Mammary epithelial cell (primary cell): ENCODE measurements at regions of chr4 and their contacts with region 1.

Region 1: GRCh38 chr4:125735102-125735501 is 420.3 kb downstream of the FAT4 start:
- DNase-seq: peak; percentile 79
- H3K4me3 ChIP-seq: no peak overlapping the region
- H3K27ac ChIP-seq: peak overlapping the region; percentile 88
- H3K4me1 ChIP-seq: peaks cover 30% of the 10 kb centered on the region
- H3K27me3 ChIP-seq: no peaks in the 10 kb centered on the region
- CTCF ChIP-seq: no peak

Region 2: GRCh38 chr4:124636788-124637187 is 1098.3 kb before region 1 on chr4:
- CTCF ChIA-PET with region 1: no interaction called
- dilution Hi-C with region 1: no loop called
- in situ Hi-C with region 1: no loop called
- intact Hi-C with region 1: loop called (anchors 5 kb)
- DNase-seq: no peak
- H3K4me3 ChIP-seq: no peak overlapping the region
- H3K27ac ChIP-seq: no peak overlapping the region
- H3K4me1 ChIP-seq: peaks cover 33% of the 10 kb centered on the region
- H3K27me3 ChIP-seq: no peaks in the 10 kb centered on the region
- CTCF ChIP-seq: no peak

Region 3: GRCh38 chr4:125389713-125390112 is 345.4 kb before region 1 on chr4:
- CTCF ChIA-PET with region 1: no interaction called
- dilution Hi-C with region 1: no loop called
- in situ Hi-C with region 1: no loop called
- intact Hi-C with region 1: loop called (anchors 5 kb)
- DNase-seq: peak; percentile 69
- H3K4me3 ChIP-seq: no peak overlapping the region
- H3K27ac ChIP-seq: peak overlapping the region; percentile 66
- H3K4me1 ChIP-seq: peaks cover 15% of the 10 kb centered on the region
- H3K27me3 ChIP-seq: no peaks in the 10 kb centered on the region
- CTCF ChIP-seq: no peak

Region 4: GRCh38 chr4:125638790-125639621 is 96.1 kb before region 1 on chr4:
- CTCF ChIA-PET with region 1: no interaction called
- dilution Hi-C with region 1: no loop called
- in situ Hi-C with region 1: no loop called
- intact Hi-C with region 1: no loop called
- DNase-seq: no peak
- H3K4me3 ChIP-seq: no peak overlapping the region
- H3K27ac ChIP-seq: no peak overlapping the region
- H3K4me1 ChIP-seq: no peaks in the 10 kb centered on the region
- H3K27me3 ChIP-seq: no peaks in the 10 kb centered on the region
- CTCF ChIP-seq: no peak

Region 5: GRCh38 chr4:126130215-126130614 is 395.1 kb after region 1 on chr4:
- CTCF ChIA-PET with region 1: no interaction called
- dilution Hi-C with region 1: no loop called
- in situ Hi-C with region 1: no loop called
- intact Hi-C with region 1: no loop called
- DNase-seq: no peak
- H3K4me3 ChIP-seq: no peak overlapping the region
- H3K27ac ChIP-seq: no peak overlapping the region
- H3K4me1 ChIP-seq: no peaks in the 10 kb centered on the region
- H3K27me3 ChIP-seq: no peaks in the 10 kb centered on the region
- CTCF ChIP-seq: no peak